ENCODE measurements at regions of chr7 and their contacts with region 1.

Region 1: GRCh38 chr7:1175967-1176851 is 16.2 kb upstream of the ZFAND2A start:
- DNase-seq: peak; percentile 79 to 90 (median 82)
- ATAC-seq: peak; percentile 95
- H3K4me3 ChIP-seq: peak overlapping the region; percentile 14
- H3K27ac ChIP-seq: peak overlapping the region; percentile 54; the same call in 2 of the 3 replicates
- H3K4me1 ChIP-seq: peaks cover 9 to 25% of the 10 kb centered on the region in 2 experiments
- H3K27me3 ChIP-seq: peaks cover 12 to 21% of the 10 kb centered on the region in 2 experiments; a peak in 4 of 5 replicates
- CTCF ChIP-seq: peak; percentile 91 to 97 (median 92)
- EP300 ChIP-seq: no peak
- POLR2A ChIP-seq: 0 out of 2 replicates have a peak, but pooled peaks have one; percentile 32
- RAD21 ChIP-seq: peak; percentile 57 to 74

Region 2: DNA sequence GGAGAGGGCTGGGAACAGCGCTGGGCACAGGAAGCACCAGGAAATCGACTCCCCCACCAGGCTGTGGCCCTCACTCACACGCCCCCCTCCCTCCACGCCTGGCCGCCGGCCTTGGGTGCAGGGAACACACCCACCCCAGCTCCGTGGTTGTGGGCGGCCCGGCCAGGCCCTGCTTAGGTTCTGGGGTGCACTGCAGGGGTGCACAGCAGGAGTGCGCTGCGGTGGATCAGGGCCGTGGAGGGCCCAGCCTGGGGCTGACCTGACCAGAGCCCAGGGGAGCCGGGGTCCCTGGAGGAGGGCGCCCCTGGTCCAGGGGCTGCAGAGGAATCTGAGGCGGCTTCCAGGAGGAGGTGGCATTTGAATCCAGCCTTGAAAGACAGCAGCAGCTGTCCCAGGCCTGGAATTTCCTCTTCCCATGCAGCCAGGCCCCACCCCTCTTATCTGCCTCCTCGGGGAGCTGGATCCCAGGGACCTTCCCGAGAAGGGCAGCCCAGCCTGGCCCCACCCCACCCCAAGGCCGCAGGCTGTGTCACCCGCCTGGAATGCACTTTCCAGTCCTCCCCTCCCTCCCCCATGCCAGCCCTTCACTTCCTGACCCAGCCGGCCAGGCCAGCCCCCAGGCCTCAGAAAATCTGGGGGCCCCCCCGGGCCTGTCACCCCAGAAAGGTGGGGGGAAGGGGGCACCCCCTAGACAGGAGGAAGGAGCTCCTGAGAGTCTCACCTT is 638.1 kb before region 1 on chr7:
- CTCF ChIA-PET with region 1: no interaction called
- POLR2A ChIA-PET with region 1: no interaction called
- in situ Hi-C with region 1: no loop called
- intact Hi-C with region 1: no loop called
- DNase-seq: peak in 2 of 4 experiments; percentile 54 to 56
- ATAC-seq: no peak
- H3K4me3 ChIP-seq: no peak overlapping the region
- H3K27ac ChIP-seq: no peak overlapping the region
- H3K4me1 ChIP-seq: peaks cover 5 to 53% of the 10 kb centered on the region in 2 experiments; a peak in 4 of 5 replicates
- H3K27me3 ChIP-seq: peaks cover 0 to 16% of the 10 kb centered on the region in 2 experiments; a peak in 2 of 5 replicates
- CTCF ChIP-seq: no peak
- EP300 ChIP-seq: no peak
- POLR2A ChIP-seq: no peak
- RAD21 ChIP-seq: no peak

Region 3: GRCh38 chr7:1065263-1066260 is 110.6 kb before region 1 on chr7:
- CTCF ChIA-PET with region 1: no interaction called
- POLR2A ChIA-PET with region 1: no interaction called
- in situ Hi-C with region 1: no loop called
- intact Hi-C with region 1: loop called (anchors 2 kb)
- DNase-seq: peak; percentile 87 to 93 (median 88)
- ATAC-seq: peak; percentile 100
- H3K4me3 ChIP-seq: no peak overlapping the region
- H3K27ac ChIP-seq: no peak overlapping the region
- H3K4me1 ChIP-seq: peaks cover 8 to 51% of the 10 kb centered on the region in 2 experiments; a peak in 4 of 5 replicates
- H3K27me3 ChIP-seq: no peaks in the 10 kb centered on the region; a peak in 1 of 5 replicates
- CTCF ChIP-seq: peak; percentile 87 to 98 (median 96)
- EP300 ChIP-seq: no peak
- POLR2A ChIP-seq: no peak
- RAD21 ChIP-seq: peak; percentile 99

Region 4: DNA sequence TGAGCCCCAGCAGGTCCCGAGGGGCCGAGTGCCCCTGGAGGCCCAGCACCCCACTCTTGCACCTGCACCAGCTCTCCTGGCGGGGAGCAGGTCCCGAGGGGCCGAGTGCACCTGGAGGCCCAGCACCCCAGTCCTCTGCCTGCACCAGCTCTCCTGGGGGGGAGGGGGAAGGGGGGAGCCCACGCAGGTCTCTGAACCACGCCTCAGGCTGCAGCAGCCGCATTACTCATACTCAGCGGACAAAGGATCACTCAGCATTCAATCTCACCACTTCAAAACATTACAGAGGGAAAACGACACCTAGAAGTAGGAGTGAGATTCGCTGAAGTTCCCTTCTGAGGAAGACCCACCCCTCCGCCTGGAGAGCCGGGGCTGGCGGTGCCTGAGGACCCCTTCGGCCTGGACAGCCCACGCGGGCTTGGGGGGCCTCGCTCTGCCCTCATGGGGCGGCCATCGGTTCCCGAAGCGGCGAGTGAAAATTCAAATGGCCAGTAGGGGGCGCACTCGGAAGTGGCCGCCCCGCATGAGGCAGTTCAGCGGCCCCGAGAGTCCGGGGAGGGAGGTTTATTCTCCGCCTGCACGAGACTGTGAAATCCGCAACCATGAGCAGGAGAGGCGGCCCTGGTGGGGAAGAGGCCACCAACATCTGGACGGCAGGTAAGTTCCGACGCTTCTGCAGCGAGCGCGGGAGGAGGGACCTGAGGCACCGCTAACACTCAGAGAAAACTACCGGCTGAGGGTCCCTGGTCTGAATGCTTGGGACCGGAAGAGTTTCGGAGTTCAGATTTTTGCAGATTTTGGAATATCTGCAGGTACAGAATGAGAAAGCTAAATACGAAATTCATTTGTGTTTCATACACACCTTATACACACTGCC is 89.4 kb before region 1 on chr7:
- CTCF ChIA-PET with region 1: interaction called, 4 read pairs
- POLR2A ChIA-PET with region 1: no interaction called
- in situ Hi-C with region 1: loop called (anchors 5 kb)
- intact Hi-C with region 1: loop called (anchors 2 kb)
- DNase-seq: peak; percentile 81 to 90 (median 88)
- ATAC-seq: peak; percentile 97
- H3K4me3 ChIP-seq: peak overlapping the region; percentile 33
- H3K27ac ChIP-seq: no peak overlapping the region
- H3K4me1 ChIP-seq: peaks cover 3 to 57% of the 10 kb centered on the region in 2 experiments; a peak in 3 of 5 replicates
- H3K27me3 ChIP-seq: no peaks in the 10 kb centered on the region
- CTCF ChIP-seq: peak; percentile 82 to 91 (median 83)
- EP300 ChIP-seq: no peak
- POLR2A ChIP-seq: no peak
- RAD21 ChIP-seq: peak; percentile 57 to 61

Region 5: GRCh38 chr7:1193593-1194424 is 17.6 kb after region 1 on chr7:
- CTCF ChIA-PET with region 1: no interaction called
- POLR2A ChIA-PET with region 1: no interaction called
- in situ Hi-C with region 1: no loop called
- intact Hi-C with region 1: no loop called
- DNase-seq: no peak
- ATAC-seq: peak; percentile 29; the same call in 1 of the 3 replicates
- H3K4me3 ChIP-seq: no peak overlapping the region
- H3K27ac ChIP-seq: no peak overlapping the region
- H3K4me1 ChIP-seq: peaks cover 0 to 9% of the 10 kb centered on the region in 2 experiments; a peak in 2 of 5 replicates
- H3K27me3 ChIP-seq: peaks cover 41 to 69% of the 10 kb centered on the region in 2 experiments
- CTCF ChIP-seq: no peak; a peak in 1 of 6 replicates
- EP300 ChIP-seq: no peak
- POLR2A ChIP-seq: no peak
- RAD21 ChIP-seq: no peak